ENCODE measurements at regions of chr15 and their contacts with region 1.

Region 1: GRCh38 chr15:75801859-75802593 is 41.2 kb upstream of the UBE2Q2 start:
- DNase-seq: peak; percentile 73 to 96
- ATAC-seq: peak; percentile 99 to 100
- H3K4me3 ChIP-seq: peak overlapping the region; percentile 34
- H3K27ac ChIP-seq: peak overlapping the region; percentile 16 to 66; a peak in 3 of 6 replicates
- H3K4me1 ChIP-seq: peaks cover 4% of the 10 kb centered on the region; the same call in 1 of the 3 replicates
- CTCF ChIP-seq: peak; percentile 98
- EP300 ChIP-seq: no peak
- POLR2A ChIP-seq: no peak
- RAD21 ChIP-seq: peak; percentile 94 to 99

Region 2: DNA sequence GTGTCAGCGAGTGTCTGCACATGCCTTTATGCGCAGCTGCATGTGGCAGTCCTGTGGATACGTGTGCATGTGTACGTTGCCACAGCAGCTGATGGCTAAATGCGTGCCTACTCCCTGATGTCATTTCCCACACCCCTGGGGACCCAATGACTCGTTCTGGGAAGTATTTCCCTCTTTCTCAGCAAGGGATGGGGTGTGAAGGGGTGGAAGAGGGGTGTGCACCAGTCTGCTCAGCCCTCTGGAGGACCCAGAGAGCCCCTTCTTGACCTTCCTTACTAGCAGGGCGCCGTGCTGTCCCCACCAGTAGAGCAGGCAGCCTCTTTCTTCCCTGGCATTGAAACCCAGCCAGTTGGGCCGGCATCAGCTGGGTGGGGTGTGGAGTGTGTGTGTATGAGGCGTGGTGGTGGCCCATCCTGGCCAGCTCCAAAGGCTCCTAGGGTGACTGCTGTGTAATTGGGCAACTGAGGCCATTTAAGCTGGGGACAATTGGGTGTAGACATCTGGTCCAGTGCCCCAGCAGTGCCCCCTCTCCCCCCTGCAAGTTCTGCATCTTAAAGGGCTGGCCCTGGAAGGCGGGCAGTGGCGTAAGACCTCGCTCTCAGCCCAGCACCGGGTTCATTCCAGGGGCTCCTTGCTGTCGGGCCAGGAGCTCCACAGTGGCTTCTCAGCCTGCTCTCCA is 135.1 kb before region 1 on chr15:
- CTCF ChIA-PET with region 1: interaction called, 11 read pairs
- POLR2A ChIA-PET with region 1: interaction called, 3 read pairs
- DNase-seq: peak; percentile 96 to 98
- ATAC-seq: peak; percentile 85
- H3K4me3 ChIP-seq: no peak overlapping the region
- H3K27ac ChIP-seq: peak overlapping the region; percentile 70 to 83
- H3K4me1 ChIP-seq: peaks cover 65% of the 10 kb centered on the region
- CTCF ChIP-seq: no peak
- EP300 ChIP-seq: peak; percentile 27 to 49; a peak in 3 of 5 replicates
- POLR2A ChIP-seq: no peak
- RAD21 ChIP-seq: no peak

Region 3: DNA sequence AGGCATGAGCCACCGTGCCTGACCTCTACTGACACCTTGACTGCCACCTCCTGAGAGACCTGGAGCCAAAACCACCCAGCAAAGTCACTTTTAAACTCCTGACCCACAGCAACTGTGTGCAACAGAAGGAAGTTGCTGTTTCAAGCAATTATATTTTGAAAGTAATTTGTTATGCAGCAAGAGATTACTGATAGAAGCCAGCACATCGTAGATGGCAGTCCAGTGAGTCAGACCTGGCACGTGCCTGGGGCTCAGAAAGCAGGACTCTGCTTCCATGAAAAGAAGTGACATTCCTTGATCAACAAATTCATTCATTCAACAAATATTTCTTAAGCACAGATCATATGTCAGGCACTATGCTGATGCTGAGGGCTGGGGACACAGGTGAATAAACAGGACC is 83.7 kb before region 1 on chr15:
- CTCF ChIA-PET with region 1: interaction called, 350 read pairs
- POLR2A ChIA-PET with region 1: no interaction called
- DNase-seq: no peak
- ATAC-seq: no peak
- H3K4me3 ChIP-seq: no peak overlapping the region
- H3K27ac ChIP-seq: no peak overlapping the region
- H3K4me1 ChIP-seq: peaks cover 17% of the 10 kb centered on the region
- CTCF ChIP-seq: no peak
- EP300 ChIP-seq: no peak
- POLR2A ChIP-seq: no peak
- RAD21 ChIP-seq: no peak

Region 4: GRCh38 chr15:75750261-75751050 is 51.6 kb before region 1 on chr15:
- CTCF ChIA-PET with region 1: interaction called, 18 read pairs
- POLR2A ChIA-PET with region 1: no interaction called
- DNase-seq: no peak
- ATAC-seq: no peak; a peak in 1 of 6 replicates
- H3K4me3 ChIP-seq: no peak overlapping the region
- H3K27ac ChIP-seq: no peak overlapping the region
- H3K4me1 ChIP-seq: peaks cover 2% of the 10 kb centered on the region; the same call in 1 of the 3 replicates
- CTCF ChIP-seq: no peak
- EP300 ChIP-seq: no peak
- POLR2A ChIP-seq: no peak
- RAD21 ChIP-seq: no peak

Region 5: GRCh38 chr15:75776065-75776423 is 26.0 kb before region 1 on chr15:
- CTCF ChIA-PET with region 1: interaction called, 26 read pairs
- POLR2A ChIA-PET with region 1: no interaction called
- DNase-seq: peak in 1 of 2 experiments; percentile 43
- ATAC-seq: 0 out of 6 replicates have a peak, but pooled peaks of 1 of the 2 experiments have one; percentile 39
- H3K4me3 ChIP-seq: no peak overlapping the region
- H3K27ac ChIP-seq: peak overlapping the region; percentile 69 to 87
- H3K4me1 ChIP-seq: peaks cover 40% of the 10 kb centered on the region
- CTCF ChIP-seq: no peak
- EP300 ChIP-seq: peak; percentile 20 to 67; a peak in 2 of 5 replicates
- POLR2A ChIP-seq: no peak
- RAD21 ChIP-seq: no peak

Region 6: GRCh38 chr15:75817138-75817935 is 15.3 kb after region 1 on chr15:
- CTCF ChIA-PET with region 1: interaction called, 51 read pairs
- POLR2A ChIA-PET with region 1: no interaction called
- DNase-seq: peak in 1 of 2 experiments; percentile 37
- ATAC-seq: peak in 1 of 2 experiments; percentile 47; a peak in 1 of 6 replicates
- H3K4me3 ChIP-seq: 0 out of 3 replicates have a peak overlapping the region, but pooled peaks have one; percentile 10
- H3K27ac ChIP-seq: peak overlapping the region; percentile 12 to 23; a peak in 1 of 6 replicates
- H3K4me1 ChIP-seq: no peaks in the 10 kb centered on the region
- CTCF ChIP-seq: no peak
- EP300 ChIP-seq: no peak
- POLR2A ChIP-seq: no peak
- RAD21 ChIP-seq: no peak

Region 7: GRCh38 chr15:75895731-75896130 is 93.7 kb after region 1 on chr15:
- CTCF ChIA-PET with region 1: no interaction called
- POLR2A ChIA-PET with region 1: no interaction called
- DNase-seq: no peak
- ATAC-seq: no peak; a peak in 1 of 6 replicates
- H3K4me3 ChIP-seq: no peak overlapping the region
- H3K27ac ChIP-seq: no peak overlapping the region
- H3K4me1 ChIP-seq: peaks cover 8% of the 10 kb centered on the region
- CTCF ChIP-seq: no peak
- EP300 ChIP-seq: no peak
- POLR2A ChIP-seq: no peak
- RAD21 ChIP-seq: no peak

Measured in A549 (cell line).